Activated CD8-positive, alpha-beta T cell treated with anti-CD3 and anti-CD28 coated beads, Interleukin-2, amount 10 ng/mL, durations not matched to agents 7 days and 5 days (primary cell): ENCODE measurements at regions of chr11 and their contacts with region 1.

Region 1: GRCh38 chr11:304915-305843 is 2.4 kb upstream of the IFITM2 start:
- DNase-seq: peak; percentile 82
- ATAC-seq: no peak
- H3K4me3 Mint-ChIP-seq: peak overlapping the region; percentile 6
- H3K27ac Mint-ChIP-seq: peak overlapping the region; percentile 11
- H3K4me1 Mint-ChIP-seq: peaks cover 63% of the 10 kb centered on the region
- H3K27me3 Mint-ChIP-seq: peaks cover 9% of the 10 kb centered on the region

Region 2: GRCh38 chr11:269146-269890 is 35.9 kb before region 1 on chr11:
- CTCF ChIA-PET with region 1: interaction called, 14 read pairs
- POLR2A ChIA-PET with region 1: interaction called, 5 read pairs
- DNase-seq: peak; percentile 69
- ATAC-seq: peak; percentile 47
- H3K4me3 Mint-ChIP-seq: peak overlapping the region; percentile 75
- H3K27ac Mint-ChIP-seq: peak overlapping the region; percentile 92
- H3K4me1 Mint-ChIP-seq: peaks cover 35% of the 10 kb centered on the region
- H3K27me3 Mint-ChIP-seq: peaks cover 2% of the 10 kb centered on the region

Region 3: GRCh38 chr11:279966-280582 is 25.1 kb before region 1 on chr11:
- CTCF ChIA-PET with region 1: interaction called, 7 read pairs
- POLR2A ChIA-PET with region 1: interaction called, 10 read pairs
- DNase-seq: peak; percentile 68
- ATAC-seq: peak; percentile 28
- H3K4me3 Mint-ChIP-seq: peak overlapping the region; percentile 81
- H3K27ac Mint-ChIP-seq: peak overlapping the region; percentile 90
- H3K4me1 Mint-ChIP-seq: peaks cover 55% of the 10 kb centered on the region
- H3K27me3 Mint-ChIP-seq: peaks cover 9% of the 10 kb centered on the region

Region 4: DNA sequence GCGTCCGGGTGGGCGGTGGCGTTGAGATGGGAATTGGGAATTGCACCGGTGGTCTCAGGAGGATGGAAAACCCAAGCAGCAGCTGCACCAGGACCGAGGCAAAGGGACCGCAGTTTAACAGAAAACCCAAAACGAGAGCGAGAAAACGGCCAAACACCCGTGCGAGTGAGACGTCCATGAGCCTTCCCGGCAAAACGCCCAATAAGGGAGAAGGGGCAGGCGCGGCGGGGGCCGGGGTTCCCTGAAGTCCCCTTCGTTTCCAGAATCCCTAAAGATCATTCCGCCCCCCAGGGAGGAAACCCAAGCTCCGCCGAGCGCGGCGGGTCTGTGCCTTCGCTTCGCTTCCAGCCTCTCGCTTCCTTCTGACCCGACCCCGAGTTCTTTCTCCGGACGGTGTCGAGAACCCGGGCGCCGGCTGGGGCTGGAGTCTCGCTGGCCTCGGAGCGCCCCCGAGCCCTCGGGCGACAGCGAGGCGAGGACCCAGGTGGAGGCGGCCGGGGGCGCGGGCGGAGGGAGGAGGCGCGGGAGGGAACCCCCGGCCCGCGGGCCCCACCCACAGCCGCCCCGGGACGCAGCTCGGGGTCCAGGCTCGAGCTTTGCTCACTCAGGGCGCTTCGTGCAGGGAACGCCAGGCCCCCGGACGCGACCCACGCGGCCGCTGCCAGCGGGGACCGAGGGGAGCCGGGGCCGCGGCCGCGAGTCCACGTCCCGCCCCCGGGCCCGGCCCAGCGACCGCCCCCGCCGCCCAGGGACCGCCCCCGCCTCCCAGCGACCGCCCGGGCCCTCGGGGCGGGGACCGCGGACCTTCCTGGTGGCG is 16.6 kb before region 1 on chr11 and contains the start of gene PGGHG:
- CTCF ChIA-PET with region 1: interaction called, 11 read pairs
- POLR2A ChIA-PET with region 1: interaction called, 54 read pairs
- DNase-seq: peak; percentile 80
- ATAC-seq: peak; percentile 51
- H3K4me3 Mint-ChIP-seq: peak within 1 kb of the TSS; percentile 94
- H3K27ac Mint-ChIP-seq: peak within 1 kb of the TSS; percentile 97
- H3K4me1 Mint-ChIP-seq: peaks cover 61% of the 10 kb centered on the region
- H3K27me3 Mint-ChIP-seq: peaks cover 2% of the 10 kb centered on the region
- total RNA-seq, gene PGGHG: 487 to 541 TPM

Region 5: GRCh38 chr11:355581-356458 is 50.6 kb after region 1 on chr11:
- CTCF ChIA-PET with region 1: interaction called, 49 read pairs
- POLR2A ChIA-PET with region 1: interaction called, 10 read pairs
- DNase-seq: peak; percentile 92
- ATAC-seq: peak; percentile 61
- H3K4me3 Mint-ChIP-seq: peak overlapping the region; percentile 84
- H3K27ac Mint-ChIP-seq: peak overlapping the region; percentile 89
- H3K4me1 Mint-ChIP-seq: peaks cover 46% of the 10 kb centered on the region
- H3K27me3 Mint-ChIP-seq: peaks cover 13% of the 10 kb centered on the region

Region 6: DNA sequence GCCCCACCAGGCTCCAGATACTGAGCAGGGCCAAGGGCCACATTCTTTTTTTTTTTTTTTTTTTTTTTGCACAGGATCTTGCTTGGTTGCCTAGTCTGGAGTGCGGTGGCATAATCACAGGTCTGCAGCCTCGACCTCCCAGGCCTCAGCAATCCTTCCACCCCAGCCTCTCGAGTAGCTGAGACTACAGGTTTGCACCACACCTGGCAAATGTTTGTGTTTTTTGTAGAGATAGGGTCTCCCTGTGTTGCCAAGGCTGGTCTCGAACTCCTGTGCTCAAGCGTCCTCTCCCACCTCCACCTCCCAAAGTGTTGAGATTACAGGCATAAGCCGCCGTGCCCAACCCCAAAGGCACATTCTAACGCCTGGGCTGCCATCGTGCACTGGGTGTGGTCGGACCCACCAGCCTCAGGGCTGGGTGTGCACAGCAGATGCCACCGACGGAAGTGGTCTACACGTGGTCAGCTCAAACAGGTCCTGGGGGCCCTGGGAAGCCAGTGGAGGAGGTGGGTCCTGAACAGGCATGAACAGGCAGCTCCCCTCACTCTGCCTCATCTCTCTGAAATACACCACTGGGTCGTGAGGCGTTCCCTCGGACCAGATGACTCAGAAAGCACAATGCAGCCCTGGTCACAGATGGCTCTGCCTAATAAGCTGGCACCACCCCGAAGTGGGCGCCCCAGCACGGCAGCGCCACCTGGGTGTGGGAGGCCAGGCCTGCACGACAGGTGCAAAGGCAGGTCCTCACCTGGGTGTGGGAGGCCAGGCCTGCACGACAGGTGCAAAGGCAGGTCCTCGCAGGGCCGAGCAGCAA is 59.0 kb after region 1 on chr11:
- CTCF ChIA-PET with region 1: interaction called, 49 read pairs
- POLR2A ChIA-PET with region 1: interaction called, 4 read pairs
- DNase-seq: peak; percentile 65
- ATAC-seq: peak; percentile 76
- H3K4me3 Mint-ChIP-seq: no peak overlapping the region
- H3K27ac Mint-ChIP-seq: no peak overlapping the region
- H3K4me1 Mint-ChIP-seq: peaks cover 23% of the 10 kb centered on the region
- H3K27me3 Mint-ChIP-seq: peaks cover 31% of the 10 kb centered on the region

Region 7: GRCh38 chr11:447923-448731 is 142.9 kb after region 1 on chr11:
- CTCF ChIA-PET with region 1: interaction called, 38 read pairs
- POLR2A ChIA-PET with region 1: no interaction called
- DNase-seq: peak; percentile 97
- ATAC-seq: peak; percentile 77
- H3K4me3 Mint-ChIP-seq: peak overlapping the region; percentile 83
- H3K27ac Mint-ChIP-seq: peak overlapping the region; percentile 97
- H3K4me1 Mint-ChIP-seq: peaks cover 28% of the 10 kb centered on the region
- H3K27me3 Mint-ChIP-seq: peaks cover 8% of the 10 kb centered on the region

Region 8: GRCh38 chr11:568306-569157 is 263.4 kb after region 1 on chr11:
- CTCF ChIA-PET with region 1: no interaction called
- POLR2A ChIA-PET with region 1: no interaction called
- DNase-seq: peak; percentile 95
- ATAC-seq: peak; percentile 96
- H3K4me3 Mint-ChIP-seq: peak overlapping the region; percentile 81
- H3K27ac Mint-ChIP-seq: peak overlapping the region; percentile 78
- H3K4me1 Mint-ChIP-seq: peaks cover 17% of the 10 kb centered on the region
- H3K27me3 Mint-ChIP-seq: peaks cover 2% of the 10 kb centered on the region

Region 9: GRCh38 chr11:606257-606656 is 301.1 kb after region 1 on chr11:
- CTCF ChIA-PET with region 1: no interaction called
- POLR2A ChIA-PET with region 1: no interaction called
- DNase-seq: no peak
- ATAC-seq: no peak
- H3K4me3 Mint-ChIP-seq: no peak overlapping the region
- H3K27ac Mint-ChIP-seq: no peak overlapping the region
- H3K4me1 Mint-ChIP-seq: no peaks in the 10 kb centered on the region
- H3K27me3 Mint-ChIP-seq: no peaks in the 10 kb centered on the region